Colonic mucosa (tissue), 4 donors: ENCODE measurements at regions of chr5 and their contacts with region 1.

Region 1: GRCh38 chr5:10695055-10695649 is 65.9 kb downstream of the DAP start:
- DNase-seq: peak; percentile 67
- H3K4me3 ChIP-seq: no peak overlapping the region
- H3K27ac ChIP-seq: no peak overlapping the region
- H3K4me1 ChIP-seq: no peaks in the 10 kb centered on the region
- H3K27me3 ChIP-seq: no peaks in the 10 kb centered on the region
- CTCF ChIP-seq: peak; percentile 76

Region 2: GRCh38 chr5:10801931-10802659 is 106.9 kb after region 1 on chr5:
- intact Hi-C with region 1: loop called (anchors 10 kb)
- DNase-seq: no peak
- H3K4me3 ChIP-seq: no peak overlapping the region
- H3K27ac ChIP-seq: no peak overlapping the region
- H3K4me1 ChIP-seq: no peaks in the 10 kb centered on the region
- H3K27me3 ChIP-seq: no peaks in the 10 kb centered on the region
- CTCF ChIP-seq: no peak

Region 3: GRCh38 chr5:10838038-10838437 is 142.9 kb after region 1 on chr5:
- intact Hi-C with region 1: no loop called
- DNase-seq: no peak
- H3K4me3 ChIP-seq: no peak overlapping the region
- H3K27ac ChIP-seq: no peak overlapping the region
- H3K4me1 ChIP-seq: no peaks in the 10 kb centered on the region
- H3K27me3 ChIP-seq: no peaks in the 10 kb centered on the region
- CTCF ChIP-seq: no peak

Region 4: DNA sequence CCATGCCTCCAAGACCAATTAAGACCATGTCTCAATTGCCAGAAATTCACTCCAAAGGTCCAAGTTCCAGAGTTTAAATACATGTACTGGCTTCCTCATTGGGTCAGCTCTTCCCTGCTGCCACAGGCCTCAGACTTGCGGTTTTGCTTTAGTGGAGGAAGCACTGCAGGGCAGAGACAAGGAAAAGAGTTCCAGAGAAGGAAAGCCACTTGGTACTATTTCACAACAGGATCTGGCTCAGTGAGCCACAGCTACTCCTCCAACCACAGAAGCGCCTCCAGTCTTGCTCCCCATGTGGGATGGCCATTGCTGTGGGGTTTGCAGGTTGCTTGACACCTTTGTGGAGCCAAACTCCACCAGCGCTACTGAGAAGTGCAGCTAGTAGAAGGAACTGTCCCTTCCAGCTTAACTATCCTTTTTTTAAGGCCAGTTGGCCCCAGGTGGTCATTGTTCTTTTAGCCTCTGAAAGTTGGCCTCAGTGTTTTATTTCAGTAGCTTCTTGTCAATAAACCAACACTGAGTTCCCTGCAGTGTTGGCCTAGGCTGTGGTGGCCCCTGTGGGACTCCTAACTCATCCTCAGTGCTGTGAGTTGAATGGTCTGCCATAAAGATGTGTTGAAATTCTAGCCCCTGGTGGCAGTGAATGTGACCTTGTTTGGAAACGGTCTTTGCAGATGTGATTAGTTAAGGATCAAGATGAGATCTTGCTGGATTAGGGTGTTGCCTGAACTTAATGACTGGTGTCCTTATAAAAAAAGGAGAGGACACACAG is 159.5 kb after region 1 on chr5:
- intact Hi-C with region 1: loop called (anchors 5 kb)
- DNase-seq: no peak
- H3K4me3 ChIP-seq: no peak overlapping the region
- H3K27ac ChIP-seq: no peak overlapping the region
- H3K4me1 ChIP-seq: no peaks in the 10 kb centered on the region
- H3K27me3 ChIP-seq: no peaks in the 10 kb centered on the region
- CTCF ChIP-seq: no peak